ENCODE measurements at regions of chr14 and their contacts with region 1.

Region 1: GRCh38 chr14:57317316-57317715 is 48.5 kb downstream of the AP5M1 start:
- DNase-seq: peak; percentile 37 to 63 (median 44)
- H3K4me3 ChIP-seq: no peak overlapping the region
- H3K4me3 Mint-ChIP-seq: no peak overlapping the region
- H3K27ac ChIP-seq: no peak overlapping the region
- H3K27ac Mint-ChIP-seq: no peak overlapping the region
- H3K4me1 ChIP-seq: no peaks in the 10 kb centered on the region
- H3K4me1 Mint-ChIP-seq: peaks cover 4% of the 10 kb centered on the region
- H3K27me3 ChIP-seq: no peaks in the 10 kb centered on the region
- H3K27me3 Mint-ChIP-seq: peaks cover 2 to 7% (median 3%) of the 10 kb centered on the region in 3 donors
- CTCF ChIP-seq: peak; percentile 83

Region 2: DNA sequence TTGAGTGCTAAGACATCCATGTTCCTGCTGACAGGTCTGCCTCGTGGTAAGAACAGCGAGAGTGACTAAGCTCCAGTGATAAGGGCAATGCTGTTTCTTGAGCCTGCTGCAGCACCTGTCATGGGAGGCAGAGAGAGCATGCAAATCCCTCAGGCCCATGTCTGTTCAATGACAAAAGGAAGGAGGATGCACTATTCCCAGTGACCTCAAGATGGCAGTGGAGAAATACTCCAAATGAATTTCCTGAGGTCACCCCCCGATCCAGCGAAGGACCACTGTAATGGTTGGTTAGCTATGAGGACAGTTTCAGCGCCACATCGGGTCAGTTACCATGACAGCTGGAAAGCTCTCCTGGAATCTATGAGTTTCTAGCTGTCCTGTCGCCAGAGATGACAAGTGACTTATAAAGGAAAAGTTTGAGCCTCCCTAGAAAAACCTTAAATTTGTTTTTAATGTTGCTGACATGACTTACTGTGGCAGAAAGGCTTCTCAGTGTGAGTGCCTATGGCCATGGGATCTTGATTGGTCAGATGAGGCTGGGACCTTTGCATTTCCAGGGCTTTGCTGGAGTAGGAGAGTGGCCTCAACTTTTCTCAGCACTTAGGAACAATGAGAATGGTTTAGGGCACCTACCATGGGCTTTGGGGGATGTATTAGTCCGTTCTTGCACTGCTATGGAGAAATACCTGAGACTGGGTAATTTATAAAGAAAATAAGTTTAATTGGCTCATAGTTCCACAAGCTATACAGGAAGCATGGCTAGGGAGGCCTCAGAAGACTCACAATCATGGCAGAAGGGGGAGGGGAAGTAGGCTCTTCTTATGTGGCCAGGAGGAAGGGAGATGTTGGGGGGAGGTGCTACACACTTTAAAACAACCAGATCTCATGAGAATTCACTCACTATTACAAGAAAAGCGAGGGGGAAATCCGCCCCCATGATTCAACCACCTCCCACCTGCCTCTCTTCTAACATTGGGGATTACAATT is 825.7 kb before region 1 on chr14:
- intact Hi-C with region 1: loop called (anchors 5 kb)
- DNase-seq: peak in 2 of 3 donors; percentile 16 to 29
- H3K4me3 ChIP-seq: no peak overlapping the region
- H3K4me3 Mint-ChIP-seq: peak overlapping the region in 1 of 2 donors; percentile 61
- H3K27ac ChIP-seq: no peak overlapping the region
- H3K27ac Mint-ChIP-seq: no peak overlapping the region
- H3K4me1 ChIP-seq: peaks cover 0 to 3% of the 10 kb centered on the region in 2 donors
- H3K4me1 Mint-ChIP-seq: peaks cover 4% of the 10 kb centered on the region
- H3K27me3 ChIP-seq: no peaks in the 10 kb centered on the region
- H3K27me3 Mint-ChIP-seq: peaks cover 0 to 1% (median under 1%) of the 10 kb centered on the region in 3 donors
- CTCF ChIP-seq: peak; percentile 59

Region 3: DNA sequence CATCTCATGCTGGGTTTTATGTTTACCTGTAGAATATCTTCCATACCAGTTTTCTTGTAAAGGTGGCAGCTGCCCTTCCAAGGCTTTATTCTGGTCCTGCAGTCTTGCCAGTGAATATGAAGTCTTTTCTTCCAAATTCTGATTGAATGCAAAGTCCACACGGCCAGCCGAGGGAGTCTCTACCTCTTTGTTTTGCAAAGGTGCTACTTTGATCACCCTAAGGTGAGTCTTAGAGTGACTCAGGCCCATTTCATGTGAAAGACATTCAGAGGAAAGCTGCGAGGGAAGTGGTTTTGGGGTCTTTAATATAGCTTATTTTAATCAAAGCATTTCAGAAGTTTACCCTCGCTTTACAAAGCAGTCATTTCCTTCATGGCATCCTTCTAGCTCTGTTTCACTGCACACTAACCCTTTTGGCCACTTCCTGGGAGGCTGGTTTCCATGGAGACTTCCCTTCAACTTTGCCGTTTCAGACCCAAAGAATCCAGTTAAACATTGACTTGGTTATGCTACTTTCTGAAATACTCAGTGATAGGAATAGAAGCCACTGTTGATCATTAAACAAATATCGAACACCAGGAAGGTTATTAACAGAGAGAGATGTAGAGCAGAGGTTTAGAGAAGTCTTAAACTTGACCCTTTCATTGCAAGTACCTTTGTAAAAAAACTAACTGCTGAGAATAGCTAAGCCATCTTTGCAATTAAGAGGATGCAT is 176.3 kb after region 1 on chr14 and contains the start of gene CCDC198:
- intact Hi-C with region 1: no loop called
- DNase-seq: no peak
- H3K4me3 ChIP-seq: no peak within 1 kb of the TSS
- H3K4me3 Mint-ChIP-seq: no peak within 1 kb of the TSS
- H3K27ac ChIP-seq: no peak within 1 kb of the TSS
- H3K27ac Mint-ChIP-seq: no peak within 1 kb of the TSS
- H3K4me1 ChIP-seq: no peaks in the 10 kb centered on the region
- H3K4me1 Mint-ChIP-seq: no peaks in the 10 kb centered on the region
- H3K27me3 ChIP-seq: no peaks in the 10 kb centered on the region
- H3K27me3 Mint-ChIP-seq: peaks cover 0 to 3% (median 2%) of the 10 kb centered on the region in 3 donors
- CTCF ChIP-seq: no peak
- polyA plus RNA-seq, gene CCDC198: not detected